ENCODE measurements at regions of chr5 and their contacts with region 1.

Region 1: GRCh38 chr5:132641241-132641723 is 16.7 kb upstream of the IL13 start:
- DNase-seq: no peak
- ATAC-seq: no peak
- H3K4me3 ChIP-seq: no peak overlapping the region
- H3K27ac ChIP-seq: no peak overlapping the region
- H3K4me1 ChIP-seq: no peaks in the 10 kb centered on the region
- H3K27me3 ChIP-seq: no peaks in the 10 kb centered on the region
- CTCF ChIP-seq: no peak

Region 2: DNA sequence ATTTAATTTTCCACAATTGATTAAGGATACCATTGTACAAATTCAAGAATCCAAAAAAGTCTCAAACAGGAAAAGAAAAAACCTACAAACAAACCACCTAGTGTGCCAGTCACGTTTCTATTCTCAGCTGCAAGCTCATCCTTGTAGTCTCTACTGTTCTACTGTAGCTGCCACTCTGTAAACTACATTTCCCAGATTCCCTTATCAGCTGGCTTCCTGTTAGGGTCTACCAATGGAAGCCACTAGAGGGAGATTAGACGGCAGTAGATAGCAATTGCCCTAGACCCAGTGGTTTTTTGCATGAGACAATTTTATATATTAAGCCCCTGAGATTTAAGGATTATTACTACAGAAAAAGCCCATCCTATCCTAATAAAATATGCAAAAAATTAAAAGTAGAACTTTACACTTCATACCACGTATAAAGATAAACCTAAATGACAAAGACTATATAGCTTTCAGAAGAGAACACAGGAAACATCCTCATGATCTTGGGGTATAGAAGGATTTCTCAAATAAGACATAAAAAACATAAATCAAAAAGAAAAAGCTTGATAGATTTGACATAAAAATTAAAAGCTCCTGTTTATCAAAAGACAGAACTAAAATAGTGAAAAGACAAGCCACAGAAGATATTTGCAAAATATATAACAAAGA is 451.0 kb before region 1 on chr5:
- CTCF ChIA-PET with region 1: interaction called, 11 read pairs
- POLR2A ChIA-PET with region 1: no interaction called
- in situ Hi-C with region 1: no loop called
- intact Hi-C with region 1: no loop called
- DNase-seq: peak; percentile 24
- ATAC-seq: peak; percentile 100
- H3K4me3 ChIP-seq: no peak overlapping the region
- H3K27ac ChIP-seq: no peak overlapping the region
- H3K4me1 ChIP-seq: no peaks in the 10 kb centered on the region
- H3K27me3 ChIP-seq: no peaks in the 10 kb centered on the region
- CTCF ChIP-seq: peak; percentile 82

Region 3: GRCh38 chr5:132704875-132705274 is 63.6 kb after region 1 on chr5:
- CTCF ChIA-PET with region 1: no interaction called
- POLR2A ChIA-PET with region 1: interaction called, 14 read pairs
- in situ Hi-C with region 1: no loop called
- intact Hi-C with region 1: no loop called
- DNase-seq: no peak
- ATAC-seq: no peak
- H3K4me3 ChIP-seq: no peak overlapping the region
- H3K27ac ChIP-seq: no peak overlapping the region
- H3K4me1 ChIP-seq: no peaks in the 10 kb centered on the region
- H3K27me3 ChIP-seq: no peaks in the 10 kb centered on the region
- CTCF ChIP-seq: no peak